Posterior vena cava (tissue), 2 donors: ENCODE measurements at regions of chr21 and their contacts with region 1.

Region 1: DNA sequence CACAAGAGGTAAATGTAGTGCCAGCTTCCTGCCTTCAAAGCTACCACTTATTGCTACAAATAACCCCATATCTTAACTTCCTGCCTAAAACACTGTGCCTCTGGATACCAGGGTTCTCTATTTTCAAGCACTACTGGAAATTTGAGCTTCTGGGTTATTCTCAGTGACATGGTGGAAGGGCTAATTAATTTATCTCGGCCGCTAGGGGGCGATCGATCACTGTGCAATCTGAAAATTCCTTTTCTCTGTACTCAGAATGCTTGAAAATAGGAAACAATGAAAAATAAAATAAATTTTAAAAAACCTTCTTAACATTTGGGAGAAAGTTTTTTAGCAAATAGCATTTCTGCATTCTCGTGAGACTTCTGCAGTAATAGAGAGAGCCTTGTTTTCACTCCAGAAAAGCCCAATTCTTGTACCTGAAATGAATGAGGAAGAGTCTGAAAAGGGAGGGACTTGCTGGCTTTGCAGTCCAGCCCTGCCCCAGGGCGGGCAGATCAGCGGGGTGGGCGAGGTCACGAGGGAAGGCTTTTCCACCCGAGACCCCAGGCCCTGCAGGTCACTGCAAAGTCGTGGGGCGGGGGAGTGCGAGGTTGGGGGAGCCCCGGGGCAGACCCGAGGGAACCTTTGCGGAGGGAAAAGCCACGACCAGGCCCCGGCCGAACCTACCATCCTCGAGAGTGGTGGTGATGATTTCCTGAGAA is 276.7 kb downstream of the PCP4 start:
- DNase-seq: peak; percentile 86

Region 2: DNA sequence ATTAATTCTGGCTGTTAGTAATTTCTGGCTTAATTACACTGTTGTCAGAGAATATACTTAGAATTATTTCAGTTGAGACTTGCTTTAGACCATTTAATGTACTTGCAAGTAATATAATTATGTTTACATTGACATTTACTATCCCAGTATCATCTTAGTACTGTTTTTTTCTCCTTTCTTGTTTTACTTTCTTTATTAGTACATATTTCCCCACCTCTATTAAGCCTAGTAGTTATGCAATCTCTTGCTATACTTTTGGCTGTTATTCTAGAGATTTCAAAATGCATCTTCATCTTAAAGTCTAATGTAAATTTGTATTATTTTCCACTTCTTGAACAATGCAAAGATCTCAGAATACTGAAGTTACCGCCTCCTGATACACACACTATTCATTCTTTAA is 855.0 kb before region 1 on chr21:
- intact Hi-C with region 1: no loop called
- DNase-seq: no peak

Region 3: DNA sequence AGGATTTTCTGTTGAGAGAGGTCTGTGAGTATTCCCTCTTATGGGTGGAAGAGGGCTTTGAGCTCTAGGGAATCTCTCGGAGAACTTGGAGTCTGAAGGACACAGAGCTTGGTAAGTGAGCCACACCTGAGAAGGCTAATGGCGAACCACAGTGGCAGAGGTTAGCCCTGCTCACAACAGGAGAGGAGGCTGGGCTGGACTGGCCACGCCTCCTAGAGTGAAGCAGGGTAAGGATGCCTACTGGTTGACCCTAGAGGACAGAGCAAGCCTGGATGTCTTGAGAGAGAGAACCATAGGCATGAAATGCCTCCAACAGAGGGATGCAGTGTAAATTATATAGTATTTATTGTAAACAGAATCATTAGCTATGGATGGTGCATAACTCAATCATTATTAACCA is 44.2 kb before region 1 on chr21:
- intact Hi-C with region 1: no loop called
- DNase-seq: no peak

Region 4: GRCh38 chr21:40385892-40386599 is 242.1 kb after region 1 on chr21:
- intact Hi-C with region 1: loop called in 1 of 2 experiments (anchors 5 kb)
- DNase-seq: no peak